Calu3 (cell line): ENCODE measurements at regions of chr14 and their contacts with region 1.

Region 1: DNA sequence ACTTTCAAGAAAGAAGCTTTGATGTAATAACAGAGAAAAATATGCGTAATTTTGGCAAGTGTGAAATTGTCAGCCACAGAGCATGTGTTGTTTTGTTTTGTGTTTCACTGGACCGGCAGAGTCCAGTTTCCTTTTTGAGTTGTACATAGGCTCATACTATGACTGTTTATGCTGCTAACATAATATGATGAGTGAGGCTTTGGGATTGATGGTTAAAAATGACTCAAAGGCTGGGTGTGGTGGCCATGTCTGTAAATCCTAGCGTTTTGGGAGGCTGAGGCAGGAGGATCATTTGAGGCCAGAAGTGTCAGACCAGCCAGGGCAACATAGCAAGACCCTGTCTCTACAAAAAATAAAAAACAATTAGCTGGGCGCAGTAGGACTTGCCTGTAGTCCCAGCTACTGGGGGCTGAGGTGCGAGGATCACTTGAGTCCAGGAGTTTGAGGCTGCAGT is 487.9 kb downstream of the PCNX1 start:
- DNase-seq: no peak
- H3K4me3 Mint-ChIP-seq: no peak overlapping the region
- H3K27ac Mint-ChIP-seq: no peak overlapping the region
- H3K4me1 Mint-ChIP-seq: no peaks in the 10 kb centered on the region
- H3K27me3 Mint-ChIP-seq: no peaks in the 10 kb centered on the region
- CTCF ChIP-seq: no peak

Region 2: GRCh38 chr14:71225113-71225512 is 170.1 kb before region 1 on chr14:
- CTCF ChIA-PET with region 1: no interaction called
- intact Hi-C with region 1: no loop called
- DNase-seq: no peak
- H3K4me3 Mint-ChIP-seq: no peak overlapping the region
- H3K27ac Mint-ChIP-seq: no peak overlapping the region
- H3K4me1 Mint-ChIP-seq: peaks cover 17% of the 10 kb centered on the region
- H3K27me3 Mint-ChIP-seq: no peaks in the 10 kb centered on the region
- CTCF ChIP-seq: no peak

Region 3: DNA sequence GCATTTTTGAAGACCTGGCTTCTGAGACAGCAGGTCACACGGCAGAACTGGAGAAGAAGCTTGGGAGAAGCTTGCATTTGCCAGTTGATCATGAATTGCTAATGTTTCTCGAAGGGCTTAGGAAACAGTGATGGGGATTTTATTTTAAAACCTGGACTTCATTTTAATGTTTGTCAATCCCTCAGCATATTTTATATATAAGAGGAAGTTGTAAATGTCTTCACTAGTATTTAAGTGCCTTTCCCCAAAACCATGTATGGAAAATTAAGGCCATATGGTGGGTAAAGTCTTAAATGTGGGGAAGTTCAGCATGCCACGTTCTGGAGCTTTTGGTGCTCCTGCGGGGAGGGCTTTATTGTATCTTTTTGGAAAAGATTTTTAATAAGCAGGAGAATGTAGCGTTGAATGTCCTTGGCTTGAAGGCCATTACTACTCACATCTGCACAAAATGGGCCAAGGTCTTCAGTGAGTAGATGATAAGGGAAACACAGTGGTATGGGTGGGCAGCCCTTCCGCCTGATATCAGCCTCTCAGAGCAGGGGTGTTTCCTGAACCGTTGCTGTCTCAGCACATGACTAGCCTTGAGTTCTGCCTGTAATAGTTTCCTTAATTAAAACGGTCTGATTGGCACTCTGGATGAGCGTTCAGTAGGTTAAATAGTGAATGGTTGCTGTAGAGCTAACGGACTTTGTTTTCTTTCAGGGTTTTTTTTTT is 23.5 kb after region 1 on chr14:
- CTCF ChIA-PET with region 1: no interaction called
- intact Hi-C with region 1: loop called (anchors 1 kb)
- DNase-seq: no peak
- H3K4me3 Mint-ChIP-seq: no peak overlapping the region
- H3K27ac Mint-ChIP-seq: no peak overlapping the region
- H3K4me1 Mint-ChIP-seq: no peaks in the 10 kb centered on the region
- H3K27me3 Mint-ChIP-seq: no peaks in the 10 kb centered on the region
- CTCF ChIP-seq: no peak